ENCODE measurements at regions of chr19 and their contacts with region 1.

Region 1: GRCh38 chr19:11587302-11587974 is 9.8 kb upstream of the ZNF627 start:
- DNase-seq: peak; percentile 65 to 83 (median 73)
- ATAC-seq: peak; percentile 49 to 88 (median 88)
- H3K4me3 ChIP-seq: no peak overlapping the region
- H3K27ac ChIP-seq: no peak overlapping the region
- H3K4me1 ChIP-seq: peaks cover 0 to 23% (median 0%) of the 10 kb centered on the region in 12 donors
- H3K27me3 ChIP-seq: no peaks in the 10 kb centered on the region
- CTCF ChIP-seq: peak; percentile 73 to 94 (median 82)
- POLR2A ChIP-seq: no peak

Region 2: DNA sequence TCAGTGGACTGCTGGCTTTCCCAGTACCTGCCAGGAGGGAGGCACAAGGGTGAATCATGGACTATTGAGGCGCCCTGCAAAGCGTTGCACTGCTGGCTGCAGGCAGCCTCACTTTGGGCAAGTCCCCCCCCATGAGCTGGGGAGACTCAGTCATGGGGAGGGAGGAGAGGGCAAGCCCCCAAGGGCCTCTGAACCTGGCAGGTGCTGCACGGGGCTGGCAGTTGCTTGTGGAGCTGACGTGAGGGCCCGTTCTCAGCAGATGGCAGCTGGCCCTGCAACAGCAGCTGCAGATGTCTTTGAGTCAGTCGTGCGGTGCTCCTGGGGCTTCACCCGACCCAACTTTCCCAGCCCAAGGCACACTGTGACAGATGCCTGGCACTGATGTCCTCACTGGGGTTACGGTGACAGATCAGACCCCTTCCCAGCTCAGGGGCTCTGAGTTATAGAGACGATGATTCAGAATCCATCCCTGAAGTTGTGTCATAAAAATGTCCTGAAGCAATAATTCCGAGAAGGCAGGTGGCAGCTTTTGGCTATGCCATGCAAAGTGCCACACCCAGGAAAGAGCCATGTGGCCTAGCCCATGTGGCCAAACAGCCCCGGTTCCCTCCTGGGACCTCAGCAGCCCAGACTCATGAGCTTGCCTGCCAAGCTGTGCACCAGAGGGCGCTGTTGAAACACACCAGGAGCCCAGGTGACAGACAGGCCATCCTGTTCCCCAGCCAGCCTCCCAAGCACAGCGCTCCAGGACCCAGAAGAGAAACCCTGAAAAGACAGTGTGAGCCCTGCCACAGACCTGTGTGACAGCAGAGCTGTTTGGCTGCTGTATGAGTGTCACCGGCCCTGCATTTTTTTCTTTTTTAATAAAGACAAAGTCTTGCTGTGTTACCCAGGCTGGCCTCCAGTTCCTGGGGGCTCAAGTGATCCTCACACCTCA is 551.7 kb before region 1 on chr19:
- intact Hi-C with region 1: loop called in 1 of 10 experiments (anchors 5 kb)
- DNase-seq: peak; percentile 89 to 95 (median 92)
- ATAC-seq: peak; percentile 93 to 96 (median 93)
- H3K4me3 ChIP-seq: no peak overlapping the region
- H3K27ac ChIP-seq: peak overlapping the region in 4 of 12 donors; percentile 9 to 33 (median 20)
- H3K4me1 ChIP-seq: peaks cover 0 to 9% (median 4%) of the 10 kb centered on the region in 12 donors
- H3K27me3 ChIP-seq: no peaks in the 10 kb centered on the region
- CTCF ChIP-seq: peak; percentile 73 to 92 (median 87)
- POLR2A ChIP-seq: no peak

Region 3: DNA sequence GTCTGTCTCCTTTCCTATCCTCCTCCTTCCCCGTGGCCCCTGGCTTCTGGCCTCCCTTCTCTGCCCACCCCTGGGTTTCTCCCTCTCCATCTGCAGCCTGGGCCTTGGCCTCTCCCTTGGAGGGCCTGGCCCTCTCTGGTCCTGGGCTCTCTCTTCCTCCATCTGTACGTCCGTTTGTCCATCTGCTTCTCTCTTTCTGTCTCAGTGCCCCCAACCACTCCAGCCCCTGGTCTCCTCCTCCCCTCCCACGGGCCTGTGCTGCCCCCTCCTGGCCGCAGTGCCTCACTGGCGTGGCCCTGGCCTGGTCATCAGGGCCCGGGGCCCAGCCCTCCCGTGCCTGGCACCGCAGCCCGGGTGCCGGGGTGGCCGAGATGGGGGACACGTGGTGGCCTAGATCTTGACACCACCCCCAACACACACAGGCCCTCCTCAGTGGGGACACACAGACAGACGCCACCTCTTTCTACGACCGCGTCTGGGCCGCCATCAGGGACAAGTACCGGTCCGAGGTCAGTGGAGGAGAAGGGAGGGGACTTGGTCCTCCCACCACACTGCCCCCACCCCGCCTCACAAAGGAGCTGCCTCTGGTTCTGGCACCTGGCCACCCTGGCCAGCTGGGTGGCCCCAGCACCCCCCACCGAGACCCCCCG is 140.7 kb before region 1 on chr19:
- intact Hi-C with region 1: no loop called
- DNase-seq: peak; percentile 41 to 84 (median 50)
- ATAC-seq: peak; percentile 33 to 78 (median 70)
- H3K4me3 ChIP-seq: no peak overlapping the region
- H3K27ac ChIP-seq: no peak overlapping the region
- H3K4me1 ChIP-seq: peaks cover 0 to 8% (median 0%) of the 10 kb centered on the region in 12 donors
- H3K27me3 ChIP-seq: peaks cover 0 to 3% (median 0%) of the 10 kb centered on the region in 9 donors
- CTCF ChIP-seq: peak; percentile 56 to 82 (median 70)
- POLR2A ChIP-seq: no peak

Region 4: GRCh38 chr19:11496391-11497163 is 90.9 kb before region 1 on chr19:
- intact Hi-C with region 1: loop called in 6 of 10 experiments (anchors 2 to 10 kb)
- DNase-seq: peak in 3 of 5 donors; percentile 57 to 86 (median 59)
- ATAC-seq: peak in 3 of 4 donors; percentile 59 to 64 (median 61)
- H3K4me3 ChIP-seq: no peak overlapping the region
- H3K27ac ChIP-seq: no peak overlapping the region
- H3K4me1 ChIP-seq: no peaks in the 10 kb centered on the region
- H3K27me3 ChIP-seq: no peaks in the 10 kb centered on the region
- CTCF ChIP-seq: peak; percentile 37 to 65 (median 58)
- POLR2A ChIP-seq: no peak

Region 5: GRCh38 chr19:11535792-11536595 is 51.4 kb before region 1 on chr19:
- intact Hi-C with region 1: loop called in 1 of 10 experiments (anchors 10 kb)
- DNase-seq: peak; percentile 90 to 96 (median 93)
- ATAC-seq: peak; percentile 74 to 90 (median 84)
- H3K4me3 ChIP-seq: peak overlapping the region in 10 of 12 donors; percentile 25 to 61 (median 50)
- H3K27ac ChIP-seq: peak overlapping the region; percentile 59 to 97 (median 85)
- H3K4me1 ChIP-seq: peaks cover 0 to 33% (median 16%) of the 10 kb centered on the region in 12 donors
- H3K27me3 ChIP-seq: peaks cover 0 to 14% (median 2%) of the 10 kb centered on the region in 9 donors
- CTCF ChIP-seq: peak; percentile 90 to 99 (median 94)
- POLR2A ChIP-seq: peak; percentile 62 to 75

Region 6: GRCh38 chr19:11558881-11559828 is 28.3 kb before region 1 on chr19 and contains the start of gene ELOF1:
- intact Hi-C with region 1: loop called in 1 of 10 experiments (anchors 1 kb)
- DNase-seq: peak; percentile 97 to 99 (median 99)
- ATAC-seq: peak; percentile 99
- H3K4me3 ChIP-seq: peak within 1 kb of the TSS; percentile 49 to 97 (median 87)
- H3K27ac ChIP-seq: peak within 1 kb of the TSS in 11 of 12 donors; percentile 70 to 88 (median 79)
- H3K4me1 ChIP-seq: peaks cover 0 to 39% (median 23%) of the 10 kb centered on the region in 12 donors
- H3K27me3 ChIP-seq: no peaks in the 10 kb centered on the region
- CTCF ChIP-seq: peak in 5 of 12 donors; percentile 1 to 42 (median 19)
- POLR2A ChIP-seq: peak in 1 of 2 donors; percentile 84
- total RNA-seq, gene ELOF1: 25.0 to 41.5 (median 27.7) TPM